Sigmoid colon (tissue), 7 donors: ENCODE measurements at regions of chr9 and their contacts with region 1.

Region 1: GRCh38 chr9:86948074-86948929 is 996 bp upstream of the GAS1 start:
- DNase-seq: peak; percentile 92
- H3K4me3 ChIP-seq: peak overlapping the region; percentile 72 to 91 (median 88)
- H3K27ac ChIP-seq: peak overlapping the region; percentile 93 to 95 (median 94)
- H3K4me1 ChIP-seq: peaks cover 0 to 28% (median 17%) of the 10 kb centered on the region in 4 donors
- H3K27me3 ChIP-seq: no peaks in the 10 kb centered on the region
- CTCF ChIP-seq: peak; percentile 88 to 98 (median 94)
- EP300 ChIP-seq: peak in 1 of 4 donors; percentile 8
- POLR2A ChIP-seq: no peak

Region 2: GRCh38 chr9:86354011-86354817 is 594.1 kb before region 1 on chr9 and contains the start of gene TUT7:
- intact Hi-C with region 1: loop called (anchors 5 kb)
- DNase-seq: peak; percentile 97
- H3K4me3 ChIP-seq: peak within 1 kb of the TSS; percentile 65 to 98 (median 77)
- H3K27ac ChIP-seq: peak within 1 kb of the TSS; percentile 93 to 99 (median 94)
- H3K4me1 ChIP-seq: peaks cover 0 to 48% (median 43%) of the 10 kb centered on the region in 4 donors
- H3K27me3 ChIP-seq: no peaks in the 10 kb centered on the region
- CTCF ChIP-seq: no peak
- EP300 ChIP-seq: peak in 1 of 4 donors; percentile 28
- POLR2A ChIP-seq: peak; percentile 41 to 57
- total RNA-seq, gene TUT7: 39.2 to 59.0 (median 48.2) TPM

Region 3: GRCh38 chr9:86486891-86487837 is 461.1 kb before region 1 on chr9:
- intact Hi-C with region 1: loop called (anchors 1 kb)
- DNase-seq: no peak
- H3K4me3 ChIP-seq: no peak overlapping the region
- H3K27ac ChIP-seq: peak overlapping the region in 1 of 4 donors; percentile 52
- H3K4me1 ChIP-seq: peaks cover 0 to 22% (median 7%) of the 10 kb centered on the region in 4 donors
- H3K27me3 ChIP-seq: no peaks in the 10 kb centered on the region
- CTCF ChIP-seq: peak; percentile 61 to 66 (median 65)
- EP300 ChIP-seq: no peak
- POLR2A ChIP-seq: no peak

Region 4: DNA sequence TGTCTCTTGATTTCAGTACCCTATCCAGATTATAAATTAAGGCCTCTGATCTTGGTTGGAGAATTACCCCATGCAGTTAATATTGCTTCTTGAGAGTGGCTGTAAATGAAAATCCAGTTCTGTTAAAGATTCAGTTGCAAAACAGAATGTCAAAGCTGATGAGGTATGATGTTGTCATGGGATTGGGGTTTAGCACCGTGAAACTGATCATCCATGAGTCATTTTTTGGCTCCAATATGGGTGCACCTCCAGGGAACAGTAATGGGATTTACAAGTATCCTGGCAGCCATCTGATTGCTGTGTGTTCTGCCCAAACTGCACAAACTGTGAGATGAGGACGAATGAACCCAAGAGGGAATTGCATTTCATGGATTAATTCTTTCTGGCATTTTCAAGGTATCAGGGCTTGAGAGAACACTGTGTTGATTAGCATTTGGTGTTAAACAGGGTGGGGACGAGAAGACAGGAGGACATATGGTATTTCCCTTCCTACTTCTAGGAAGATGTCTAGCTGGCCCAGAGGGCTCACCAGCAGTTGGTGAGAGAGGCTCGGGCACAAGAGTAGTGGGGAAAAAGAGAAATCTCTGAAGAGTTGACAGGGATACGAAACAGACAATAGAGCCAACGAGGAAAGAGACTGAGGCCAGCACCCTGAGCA is 215.7 kb before region 1 on chr9:
- intact Hi-C with region 1: loop called (anchors 10 kb)
- DNase-seq: peak; percentile 81
- H3K4me3 ChIP-seq: no peak overlapping the region
- H3K27ac ChIP-seq: peak overlapping the region; percentile 48 to 65 (median 52)
- H3K4me1 ChIP-seq: peaks cover 0 to 53% (median 36%) of the 10 kb centered on the region in 4 donors
- H3K27me3 ChIP-seq: no peaks in the 10 kb centered on the region
- CTCF ChIP-seq: no peak
- EP300 ChIP-seq: no peak
- POLR2A ChIP-seq: no peak

Region 5: DNA sequence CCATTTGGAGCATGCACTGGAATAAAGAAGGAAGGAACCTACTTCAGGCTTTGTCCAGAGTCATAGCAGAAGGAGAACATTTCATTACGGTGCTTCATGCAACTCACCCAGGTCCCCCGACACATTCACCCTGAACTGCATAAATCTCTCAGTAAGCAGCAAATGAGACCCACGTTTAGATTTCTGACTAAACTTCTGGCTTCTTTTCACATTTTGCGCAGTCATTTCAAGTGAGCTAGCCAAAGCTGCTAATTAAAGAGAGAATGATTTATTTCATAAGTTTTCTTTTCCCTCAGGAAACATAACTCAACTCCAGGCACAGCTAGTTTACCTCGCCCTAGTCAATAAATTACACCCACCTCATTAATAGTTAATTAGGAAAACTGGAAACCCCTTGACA is 87.6 kb after region 1 on chr9:
- intact Hi-C with region 1: loop called (anchors 2 kb)
- DNase-seq: no peak
- H3K4me3 ChIP-seq: no peak overlapping the region
- H3K27ac ChIP-seq: peak overlapping the region; percentile 77 to 85 (median 82)
- H3K4me1 ChIP-seq: peaks cover 0 to 58% (median 32%) of the 10 kb centered on the region in 4 donors
- H3K27me3 ChIP-seq: no peaks in the 10 kb centered on the region
- CTCF ChIP-seq: no peak
- EP300 ChIP-seq: no peak
- POLR2A ChIP-seq: no peak

Region 6: GRCh38 chr9:87324613-87325194 is 376.4 kb after region 1 on chr9:
- intact Hi-C with region 1: loop called (anchors 2 kb)
- DNase-seq: no peak
- H3K4me3 ChIP-seq: no peak overlapping the region
- H3K27ac ChIP-seq: no peak overlapping the region
- H3K4me1 ChIP-seq: peaks cover 0 to 16% (median 4%) of the 10 kb centered on the region in 4 donors
- H3K27me3 ChIP-seq: no peaks in the 10 kb centered on the region
- CTCF ChIP-seq: peak; percentile 71 to 85 (median 77)
- EP300 ChIP-seq: no peak
- POLR2A ChIP-seq: no peak